Right ventricle myocardium inferior (tissue), 1 donor: ENCODE measurements at regions of chr9 and their contacts with region 1.

Region 1: GRCh38 chr9:36407122-36407723 is 7.2 kb upstream of the RNF38 start:
- DNase-seq: no peak
- ATAC-seq: peak; percentile 82

Region 2: DNA sequence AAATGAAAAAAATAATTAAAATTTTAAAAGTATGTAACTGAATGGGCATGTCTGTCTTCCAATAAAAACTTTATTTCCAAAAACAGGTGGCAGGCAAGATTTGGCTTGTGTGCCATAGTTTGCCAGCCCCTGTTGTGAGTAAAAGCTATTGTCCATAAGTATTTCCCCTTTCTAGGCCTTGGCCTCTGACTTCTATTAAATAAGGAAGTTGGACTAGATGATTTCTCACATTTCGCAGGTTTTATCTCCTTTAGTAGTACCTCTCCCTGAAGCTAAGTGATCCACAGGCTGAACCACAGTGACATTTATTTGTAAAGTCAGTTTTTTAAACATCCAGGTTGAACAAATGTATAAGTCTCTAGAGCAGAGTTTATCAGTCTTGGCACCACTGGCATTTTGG is 329.2 kb before region 1 on chr9:
- intact Hi-C with region 1: no loop called
- DNase-seq: no peak
- ATAC-seq: no peak

Region 3: DNA sequence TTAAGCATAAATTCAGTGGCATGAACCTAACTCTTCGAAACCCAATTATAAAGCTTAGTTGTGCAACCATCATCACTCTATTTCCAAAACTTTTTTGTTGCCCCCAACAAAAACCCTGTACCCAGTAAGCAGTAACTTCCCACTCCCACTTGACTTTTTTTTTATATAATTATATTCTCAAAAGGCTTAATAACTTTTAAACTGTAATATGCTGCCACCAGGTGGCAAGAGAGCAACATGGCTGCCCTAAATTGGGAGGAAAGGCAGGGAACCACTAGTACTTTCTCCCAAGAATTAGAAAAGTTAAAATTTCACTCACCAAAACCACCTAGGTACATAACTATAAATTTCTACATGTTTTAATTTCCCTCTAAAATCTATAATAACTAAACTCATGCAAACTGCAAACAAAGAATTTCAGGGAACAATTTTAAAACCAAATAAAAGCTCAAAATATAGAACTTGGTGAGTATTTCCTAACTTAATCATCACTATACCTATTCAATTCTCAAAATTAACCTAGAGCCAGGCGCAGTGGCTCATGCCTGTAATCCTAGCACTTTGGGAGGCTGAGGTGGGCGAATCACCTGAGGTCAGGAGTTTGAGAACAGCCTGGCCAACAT is 43.0 kb after region 1 on chr9:
- intact Hi-C with region 1: loop called (anchors 1 kb)
- DNase-seq: no peak
- ATAC-seq: no peak